PC-9 (cell line): ENCODE measurements at regions of chr12 and their contacts with region 1.

Region 1: GRCh38 chr12:32399337-32400113 is at the start of gene FGD4:
- DNase-seq: peak; percentile 88 to 94
- H3K4me3 ChIP-seq: peak within 1 kb of the TSS; percentile 78
- H3K27ac ChIP-seq: peak within 1 kb of the TSS; percentile 61
- H3K4me1 ChIP-seq: peaks cover 23% of the 10 kb centered on the region
- H3K27me3 ChIP-seq: no peaks in the 10 kb centered on the region
- CTCF ChIP-seq: peak; percentile 55
- total RNA-seq, gene FGD4: 26.2 and 28.3 TPM in 2 replicates

Region 2: GRCh38 chr12:32039347-32039746 is 360.2 kb before region 1 on chr12:
- CTCF ChIA-PET with region 1: no interaction called
- POLR2A ChIA-PET with region 1: no interaction called
- intact Hi-C with region 1: no loop called
- DNase-seq: no peak
- H3K4me3 ChIP-seq: no peak overlapping the region
- H3K27ac ChIP-seq: no peak overlapping the region
- H3K4me1 ChIP-seq: no peaks in the 10 kb centered on the region
- H3K27me3 ChIP-seq: no peaks in the 10 kb centered on the region
- CTCF ChIP-seq: no peak

Region 3: GRCh38 chr12:32419520-32419960 is 20.0 kb after region 1 on chr12:
- CTCF ChIA-PET with region 1: interaction called, 12 read pairs
- POLR2A ChIA-PET with region 1: no interaction called
- intact Hi-C with region 1: no loop called
- DNase-seq: no peak
- H3K4me3 ChIP-seq: no peak overlapping the region
- H3K27ac ChIP-seq: peak overlapping the region; percentile 26; the same call in 1 of the 2 replicates
- H3K4me1 ChIP-seq: peaks cover 15% of the 10 kb centered on the region
- H3K27me3 ChIP-seq: no peaks in the 10 kb centered on the region
- CTCF ChIP-seq: no peak

Region 4: DNA sequence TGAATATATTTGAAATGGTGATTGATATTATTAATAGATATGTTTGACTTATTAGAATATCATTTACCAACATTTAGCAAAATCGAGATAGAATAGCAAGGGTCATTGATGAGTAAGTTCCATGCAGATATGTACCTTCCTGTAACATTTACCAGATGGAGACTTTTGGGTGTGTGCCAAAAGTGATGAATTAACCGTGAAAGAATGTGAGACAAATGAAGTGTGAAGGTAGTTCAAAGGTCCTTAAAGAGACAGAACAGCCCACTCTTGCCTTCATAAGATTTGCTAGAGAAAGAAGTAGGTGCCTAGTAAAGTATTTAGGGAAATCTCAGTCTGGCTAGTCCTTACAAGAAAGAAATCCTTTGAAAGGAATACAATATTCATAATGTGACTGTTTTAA is 45.4 kb after region 1 on chr12:
- CTCF ChIA-PET with region 1: no interaction called
- POLR2A ChIA-PET with region 1: interaction called, 4 read pairs
- intact Hi-C with region 1: loop called (anchors 2 kb)
- DNase-seq: peak; percentile 73 to 91
- H3K4me3 ChIP-seq: no peak overlapping the region
- H3K27ac ChIP-seq: peak overlapping the region; percentile 57
- H3K4me1 ChIP-seq: peaks cover 64% of the 10 kb centered on the region
- H3K27me3 ChIP-seq: no peaks in the 10 kb centered on the region
- CTCF ChIP-seq: no peak

Region 5: DNA sequence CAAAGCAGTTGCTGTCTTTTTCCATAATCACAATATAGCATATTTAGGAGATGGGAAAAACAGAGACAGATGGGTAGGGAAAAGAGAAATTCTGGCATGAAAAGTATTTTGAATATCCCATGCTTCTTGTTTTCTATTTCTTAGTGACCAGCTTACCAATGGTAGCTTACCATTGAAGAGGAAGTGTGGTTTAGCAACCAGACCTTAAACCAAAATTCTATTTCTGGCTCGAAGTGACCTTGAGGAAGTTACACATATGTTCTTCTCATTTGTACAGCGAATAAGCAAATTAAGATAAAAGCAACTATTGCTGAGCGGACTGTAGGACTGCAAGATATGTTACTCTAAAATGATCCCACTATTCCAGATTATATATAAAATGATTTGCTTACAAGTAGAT is 82.7 kb after region 1 on chr12:
- CTCF ChIA-PET with region 1: no interaction called
- POLR2A ChIA-PET with region 1: no interaction called
- intact Hi-C with region 1: loop called (anchors 10 kb)
- DNase-seq: no peak
- H3K4me3 ChIP-seq: no peak overlapping the region
- H3K27ac ChIP-seq: no peak overlapping the region
- H3K4me1 ChIP-seq: peaks cover 11% of the 10 kb centered on the region
- H3K27me3 ChIP-seq: no peaks in the 10 kb centered on the region
- CTCF ChIP-seq: no peak

Region 6: GRCh38 chr12:32605034-32605719 is 205.7 kb after region 1 on chr12:
- CTCF ChIA-PET with region 1: no interaction called
- POLR2A ChIA-PET with region 1: no interaction called
- intact Hi-C with region 1: loop called (anchors 5 kb)
- DNase-seq: peak; percentile 33 to 73
- H3K4me3 ChIP-seq: no peak overlapping the region
- H3K27ac ChIP-seq: peak overlapping the region; percentile 43
- H3K4me1 ChIP-seq: peaks cover 18% of the 10 kb centered on the region
- H3K27me3 ChIP-seq: no peaks in the 10 kb centered on the region
- CTCF ChIP-seq: no peak

Region 7: DNA sequence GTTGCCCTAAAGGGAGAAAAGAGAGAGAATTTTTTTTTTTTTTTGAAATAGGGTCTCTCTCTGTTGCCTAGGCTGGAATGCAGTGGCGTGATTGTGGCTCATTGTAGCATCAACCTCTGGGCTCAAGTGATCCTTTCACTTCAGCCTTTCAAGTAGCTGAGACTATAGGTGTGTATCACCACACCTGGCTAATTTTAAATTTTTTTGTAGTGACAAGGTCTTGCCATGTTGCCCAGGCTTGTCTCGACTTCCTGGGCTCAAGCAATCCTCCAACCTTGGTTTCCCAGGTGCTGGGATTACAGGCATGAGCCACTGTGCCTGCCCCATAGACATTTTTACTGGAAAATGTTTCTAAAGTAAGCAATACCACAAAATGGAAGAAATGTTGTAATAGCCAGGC is 319.4 kb after region 1 on chr12:
- CTCF ChIA-PET with region 1: no interaction called
- POLR2A ChIA-PET with region 1: interaction called, 10 read pairs
- intact Hi-C with region 1: no loop called
- DNase-seq: no peak
- H3K4me3 ChIP-seq: no peak overlapping the region
- H3K27ac ChIP-seq: no peak overlapping the region
- H3K4me1 ChIP-seq: no peaks in the 10 kb centered on the region
- H3K27me3 ChIP-seq: no peaks in the 10 kb centered on the region
- CTCF ChIP-seq: no peak